Activated B cell treated with CpG ODN at 0.5 μM for 24 hours (primary cell): ENCODE measurements at regions of chr4 and their contacts with region 1.

Region 1: GRCh38 chr4:2536193-2537010 is at the start of gene FAM193A:
- DNase-seq: peak; percentile 94
- ATAC-seq: peak; percentile 92
- H3K4me3 Mint-ChIP-seq: peak within 1 kb of the TSS; percentile 92
- H3K27ac Mint-ChIP-seq: peak within 1 kb of the TSS; percentile 90
- H3K4me1 Mint-ChIP-seq: peaks cover 23% of the 10 kb centered on the region
- H3K27me3 Mint-ChIP-seq: no peaks in the 10 kb centered on the region
- CTCF ChIP-seq: no peak
- total RNA-seq, gene FAM193A: 40.0 and 42.8 TPM in 2 replicates

Region 2: GRCh38 chr4:1683736-1684505 is 852.5 kb before region 1 on chr4 and contains the start of gene FAM53A:
- CTCF ChIA-PET with region 1: no interaction called
- POLR2A ChIA-PET with region 1: no interaction called
- intact Hi-C with region 1: no loop called
- DNase-seq: peak; percentile 99
- ATAC-seq: peak; percentile 95
- H3K4me3 Mint-ChIP-seq: peak within 1 kb of the TSS; percentile 86
- H3K27ac Mint-ChIP-seq: peak within 1 kb of the TSS; percentile 69
- H3K4me1 Mint-ChIP-seq: peaks cover 10% of the 10 kb centered on the region
- H3K27me3 Mint-ChIP-seq: no peaks in the 10 kb centered on the region
- CTCF ChIP-seq: no peak
- total RNA-seq, gene FAM53A: 0.81 and 1.2 TPM in 2 replicates

Region 3: GRCh38 chr4:1939664-1940509 is 596.5 kb before region 1 on chr4:
- CTCF ChIA-PET with region 1: no interaction called
- POLR2A ChIA-PET with region 1: no interaction called
- intact Hi-C with region 1: no loop called
- DNase-seq: no peak
- ATAC-seq: no peak
- H3K4me3 Mint-ChIP-seq: no peak overlapping the region
- H3K27ac Mint-ChIP-seq: no peak overlapping the region
- H3K4me1 Mint-ChIP-seq: no peaks in the 10 kb centered on the region
- H3K27me3 Mint-ChIP-seq: no peaks in the 10 kb centered on the region
- CTCF ChIP-seq: no peak

Region 4: DNA sequence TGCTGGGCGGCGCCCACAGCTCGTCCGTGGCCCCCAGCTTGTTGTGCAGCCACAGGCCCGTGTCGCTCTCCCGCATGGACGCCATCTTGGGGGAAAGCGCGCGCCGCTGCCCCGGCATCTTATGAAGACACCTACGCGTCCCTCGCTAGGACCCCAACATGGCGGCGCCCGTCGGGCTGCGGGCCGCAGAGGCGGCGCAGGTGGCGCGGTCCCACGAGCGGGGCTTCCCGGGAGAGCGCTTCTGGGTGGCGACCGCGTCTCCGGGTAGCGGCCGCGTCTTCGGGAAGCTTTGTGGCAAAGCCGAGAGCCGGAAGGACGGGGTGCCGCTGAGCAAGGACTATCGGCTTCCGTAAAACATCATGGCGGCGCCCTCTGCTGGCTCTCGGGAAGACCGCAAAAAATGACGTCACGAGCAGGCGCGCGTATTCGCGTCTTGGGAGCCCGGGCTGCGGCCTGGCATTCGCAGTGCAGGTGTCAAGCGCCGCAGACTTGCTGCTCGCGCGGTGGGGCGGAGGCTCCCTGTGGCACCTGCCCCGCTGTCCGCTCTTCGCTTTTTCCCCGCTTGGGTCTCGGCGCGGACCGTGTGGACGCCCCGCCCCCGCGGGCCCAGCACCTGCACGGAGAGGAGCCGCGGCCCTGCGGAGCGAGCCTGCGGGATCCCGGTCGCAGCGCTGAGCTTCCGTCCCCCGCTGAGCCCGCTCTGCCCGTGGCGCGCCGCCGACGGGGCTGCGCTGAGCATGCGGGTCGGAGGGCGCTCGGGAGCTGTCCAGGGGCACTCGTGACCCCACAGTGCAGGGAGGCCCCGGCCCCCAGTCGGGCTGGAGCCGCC is 527.3 kb before region 1 on chr4 and contains the start of gene NELFA:
- CTCF ChIA-PET with region 1: no interaction called
- POLR2A ChIA-PET with region 1: no interaction called
- intact Hi-C with region 1: loop called (anchors 10 kb)
- DNase-seq: peak; percentile 93
- ATAC-seq: peak; percentile 80
- H3K4me3 Mint-ChIP-seq: peak within 1 kb of the TSS; percentile 90
- H3K27ac Mint-ChIP-seq: peak within 1 kb of the TSS; percentile 91
- H3K4me1 Mint-ChIP-seq: peaks cover 32% of the 10 kb centered on the region
- H3K27me3 Mint-ChIP-seq: peaks cover 4% of the 10 kb centered on the region
- CTCF ChIP-seq: no peak
- total RNA-seq, gene NELFA: 44.7 and 49.9 TPM in 2 replicates

Region 5: DNA sequence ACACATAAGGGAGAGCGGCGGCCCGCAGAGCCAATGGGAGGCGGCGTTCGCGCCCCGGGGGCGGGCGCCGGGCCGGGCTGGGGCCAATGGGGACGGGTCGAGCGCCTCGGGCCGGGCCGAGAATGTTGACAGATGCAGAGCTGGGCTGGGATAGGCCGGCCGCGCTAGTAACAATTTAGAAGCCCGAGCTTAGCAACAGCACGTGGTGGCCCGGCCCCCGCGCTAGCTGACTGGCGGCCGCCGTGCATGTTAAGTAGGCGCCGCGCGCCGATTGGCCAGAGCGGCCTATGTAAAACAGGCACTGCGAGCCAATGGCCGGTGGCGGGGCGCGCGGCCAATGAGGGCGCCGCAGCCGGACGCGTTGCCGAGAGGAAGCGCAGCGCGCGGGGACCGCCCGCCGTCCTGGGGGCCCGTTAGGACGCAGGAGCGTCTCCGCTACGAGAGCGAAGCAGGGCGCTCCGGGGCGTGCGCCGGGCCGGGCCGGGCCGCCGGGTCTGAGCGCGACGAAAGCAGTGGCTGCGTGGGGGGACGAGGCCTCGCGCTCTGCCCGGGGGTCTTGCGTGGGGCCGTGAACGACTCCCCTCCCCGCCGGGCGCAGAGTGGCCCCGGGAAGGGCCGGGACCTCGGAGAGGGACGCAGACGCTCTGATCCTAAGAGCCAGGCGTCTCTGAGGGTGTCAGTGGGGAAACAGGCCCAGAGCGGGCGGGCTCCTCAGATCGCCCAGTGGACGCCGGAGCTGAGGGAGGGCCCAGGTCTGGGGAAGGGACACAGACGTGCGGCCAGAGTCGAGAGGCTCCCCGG is 274.1 kb before region 1 on chr4:
- CTCF ChIA-PET with region 1: no interaction called
- POLR2A ChIA-PET with region 1: no interaction called
- intact Hi-C with region 1: loop called (anchors 1 kb)
- DNase-seq: peak; percentile 95
- ATAC-seq: peak; percentile 89
- H3K4me3 Mint-ChIP-seq: peak overlapping the region; percentile 78
- H3K27ac Mint-ChIP-seq: peak overlapping the region; percentile 85
- H3K4me1 Mint-ChIP-seq: peaks cover 18% of the 10 kb centered on the region
- H3K27me3 Mint-ChIP-seq: no peaks in the 10 kb centered on the region
- CTCF ChIP-seq: no peak

Region 6: GRCh38 chr4:2354118-2354517 is 182.3 kb before region 1 on chr4:
- CTCF ChIA-PET with region 1: no interaction called
- POLR2A ChIA-PET with region 1: no interaction called
- intact Hi-C with region 1: no loop called
- DNase-seq: no peak
- ATAC-seq: peak; percentile 35
- H3K4me3 Mint-ChIP-seq: no peak overlapping the region
- H3K27ac Mint-ChIP-seq: peak overlapping the region; percentile 56
- H3K4me1 Mint-ChIP-seq: peaks cover 12% of the 10 kb centered on the region
- H3K27me3 Mint-ChIP-seq: no peaks in the 10 kb centered on the region
- CTCF ChIP-seq: no peak

Region 7: DNA sequence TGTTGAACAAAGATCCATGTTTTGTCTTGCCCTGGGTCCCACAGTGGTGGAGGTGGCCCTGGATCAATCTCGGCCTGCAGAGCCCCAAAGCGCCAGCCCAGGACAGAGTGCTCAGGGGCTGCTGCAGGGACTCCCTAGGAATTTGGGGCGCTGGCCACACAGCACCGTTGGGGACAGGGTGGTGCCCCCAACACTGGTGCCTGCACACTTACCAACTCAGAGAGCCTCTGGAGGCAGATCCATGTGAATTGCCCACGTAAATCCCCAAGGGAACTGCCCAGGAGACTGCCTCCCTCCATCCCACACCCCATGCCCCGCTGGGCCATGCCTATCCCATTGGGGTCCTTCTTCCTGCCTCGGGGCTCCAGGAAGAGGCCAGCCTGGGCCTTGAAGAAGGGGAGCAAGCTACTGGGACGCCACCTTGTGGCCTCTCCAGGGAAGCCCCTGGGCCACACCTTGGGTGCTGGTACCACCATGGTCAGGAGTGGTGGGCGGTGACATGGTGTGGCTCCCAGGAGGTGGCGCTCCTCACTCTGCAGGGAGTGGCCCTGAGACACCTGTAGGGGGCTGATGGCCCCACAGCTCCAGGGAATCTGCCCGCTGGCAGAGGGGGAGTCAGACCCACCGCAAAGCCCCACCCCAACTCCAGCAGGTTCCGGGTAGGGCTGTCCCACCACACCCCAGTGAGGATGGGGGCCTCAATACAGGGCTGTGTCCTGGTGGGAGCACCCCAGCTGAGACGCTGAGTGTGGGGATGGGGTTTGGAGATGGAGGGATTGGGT is 94.8 kb before region 1 on chr4:
- CTCF ChIA-PET with region 1: interaction called, 4 read pairs
- POLR2A ChIA-PET with region 1: interaction called, 3 read pairs
- intact Hi-C with region 1: loop called (anchors 1 kb)
- DNase-seq: peak; percentile 61
- ATAC-seq: peak; percentile 100
- H3K4me3 Mint-ChIP-seq: no peak overlapping the region
- H3K27ac Mint-ChIP-seq: no peak overlapping the region
- H3K4me1 Mint-ChIP-seq: peaks cover 4% of the 10 kb centered on the region
- H3K27me3 Mint-ChIP-seq: no peaks in the 10 kb centered on the region
- CTCF ChIP-seq: no peak

Region 8: DNA sequence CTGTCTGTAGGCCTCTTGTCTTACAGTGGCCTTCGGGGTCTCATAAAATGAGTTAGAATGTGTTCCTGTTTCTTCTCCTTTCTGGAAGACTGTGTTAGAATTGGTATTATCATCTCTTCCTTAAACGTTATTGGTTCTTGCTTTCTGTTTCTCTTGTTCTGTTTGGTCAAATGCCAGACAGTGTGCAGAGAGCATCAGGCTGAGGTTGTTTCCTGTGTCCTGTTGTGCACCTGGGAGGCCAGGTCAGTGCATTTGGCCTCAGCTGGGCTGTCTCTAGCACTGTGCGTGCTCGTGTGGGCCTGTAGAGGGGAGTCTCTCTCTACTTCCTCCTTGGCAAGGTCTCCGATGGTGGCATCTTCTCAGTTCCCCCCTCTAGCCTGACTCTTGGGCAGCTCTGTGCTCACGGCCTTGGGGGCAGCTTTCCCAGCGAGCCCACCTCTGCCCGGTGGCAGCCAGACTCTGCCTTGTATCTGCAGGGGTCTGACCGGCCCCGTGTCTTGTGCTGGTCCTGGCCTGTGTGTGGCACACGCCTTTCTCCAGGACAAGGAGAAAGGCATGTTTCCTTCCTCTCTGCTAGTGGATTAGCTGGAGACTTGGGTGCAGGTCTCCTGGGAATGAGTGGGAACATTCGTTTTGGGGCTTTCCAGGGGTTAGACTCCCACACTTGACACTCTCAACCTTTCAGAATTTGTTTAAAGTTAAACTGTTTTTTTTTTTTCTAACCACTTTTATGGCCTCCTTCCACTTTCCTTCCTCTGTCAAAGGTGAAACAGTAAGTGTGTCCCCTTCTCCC is 62.3 kb after region 1 on chr4:
- CTCF ChIA-PET with region 1: no interaction called
- POLR2A ChIA-PET with region 1: interaction called, 6 read pairs
- intact Hi-C with region 1: loop called (anchors 5 kb)
- DNase-seq: peak; percentile 41
- ATAC-seq: peak; percentile 98
- H3K4me3 Mint-ChIP-seq: peak overlapping the region; percentile 67
- H3K27ac Mint-ChIP-seq: peak overlapping the region; percentile 85
- H3K4me1 Mint-ChIP-seq: peaks cover 68% of the 10 kb centered on the region
- H3K27me3 Mint-ChIP-seq: no peaks in the 10 kb centered on the region
- CTCF ChIP-seq: no peak

Region 9: GRCh38 chr4:2948895-2949765 is 412.7 kb after region 1 on chr4:
- CTCF ChIA-PET with region 1: no interaction called
- POLR2A ChIA-PET with region 1: no interaction called
- intact Hi-C with region 1: no loop called
- DNase-seq: no peak
- ATAC-seq: peak; percentile 42
- H3K4me3 Mint-ChIP-seq: no peak overlapping the region
- H3K27ac Mint-ChIP-seq: no peak overlapping the region
- H3K4me1 Mint-ChIP-seq: no peaks in the 10 kb centered on the region
- H3K27me3 Mint-ChIP-seq: no peaks in the 10 kb centered on the region
- CTCF ChIP-seq: no peak

Region 10: GRCh38 chr4:2963175-2963965 is 427.0 kb after region 1 on chr4 and contains the starts of genes GRK4 and NOP14:
- CTCF ChIA-PET with region 1: no interaction called
- POLR2A ChIA-PET with region 1: interaction called, 4 read pairs
- intact Hi-C with region 1: loop called (anchors 1 kb)
- DNase-seq: peak; percentile 89
- ATAC-seq: peak; percentile 91
- H3K4me3 Mint-ChIP-seq: peak within 1 kb of the TSS; percentile 91
- H3K27ac Mint-ChIP-seq: peak within 1 kb of the TSS; percentile 92
- H3K4me1 Mint-ChIP-seq: peaks cover 29% of the 10 kb centered on the region
- H3K27me3 Mint-ChIP-seq: no peaks in the 10 kb centered on the region
- CTCF ChIP-seq: no peak
- total RNA-seq, gene GRK4: 1.4 and 2.1 TPM in 2 replicates
- total RNA-seq, gene NOP14: 56.3 and 57.3 TPM in 2 replicates